GM23248 (cell line): ENCODE measurements at regions of chr9 and their contacts with region 1.

Region 1: GRCh38 chr9:113581865-113582697 is 118.6 kb downstream of the RGS3 start:
- DNase-seq: peak; percentile 69
- H3K4me3 ChIP-seq: no peak overlapping the region
- H3K27ac ChIP-seq: no peak overlapping the region
- H3K4me1 ChIP-seq: peaks cover 47% of the 10 kb centered on the region
- H3K27me3 ChIP-seq: no peaks in the 10 kb centered on the region

Region 2: GRCh38 chr9:113454914-113455761 is 126.9 kb before region 1 on chr9:
- in situ Hi-C with region 1: loop called (anchors 5 kb)
- DNase-seq: peak; percentile 91
- H3K4me3 ChIP-seq: peak overlapping the region; percentile 15; the same call in 1 of the 2 replicates
- H3K27ac ChIP-seq: peak overlapping the region; percentile 83
- H3K4me1 ChIP-seq: peaks cover 27% of the 10 kb centered on the region
- H3K27me3 ChIP-seq: no peaks in the 10 kb centered on the region